Panc1 (cell line): ENCODE measurements at regions of chr6 and their contacts with region 1.

Region 1: DNA sequence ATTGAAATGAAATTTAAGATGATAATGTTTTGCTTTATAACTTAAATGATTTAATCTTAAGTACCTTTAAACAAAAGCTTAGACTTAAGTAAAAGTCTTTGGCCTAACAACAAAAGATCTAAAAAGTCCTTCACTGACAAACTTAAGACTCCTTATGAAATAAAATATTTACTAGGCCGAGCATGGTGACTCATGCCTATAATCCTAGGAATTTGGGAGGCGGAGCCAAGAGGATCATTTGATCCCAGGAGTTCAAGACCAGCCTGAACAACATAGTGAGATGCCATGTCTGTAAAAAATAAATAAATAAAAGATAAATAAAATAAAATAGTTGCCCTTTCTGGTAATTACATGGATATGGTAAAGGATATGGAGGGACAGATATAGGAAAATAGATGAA is 12.4 kb downstream of the KATNA1 start:
- DNase-seq: no peak
- ATAC-seq: no peak
- H3K4me3 ChIP-seq: no peak overlapping the region
- H3K27ac ChIP-seq: no peak overlapping the region
- H3K4me1 ChIP-seq: no peaks in the 10 kb centered on the region
- H3K27me3 ChIP-seq: no peaks in the 10 kb centered on the region
- CTCF ChIP-seq: no peak

Region 2: DNA sequence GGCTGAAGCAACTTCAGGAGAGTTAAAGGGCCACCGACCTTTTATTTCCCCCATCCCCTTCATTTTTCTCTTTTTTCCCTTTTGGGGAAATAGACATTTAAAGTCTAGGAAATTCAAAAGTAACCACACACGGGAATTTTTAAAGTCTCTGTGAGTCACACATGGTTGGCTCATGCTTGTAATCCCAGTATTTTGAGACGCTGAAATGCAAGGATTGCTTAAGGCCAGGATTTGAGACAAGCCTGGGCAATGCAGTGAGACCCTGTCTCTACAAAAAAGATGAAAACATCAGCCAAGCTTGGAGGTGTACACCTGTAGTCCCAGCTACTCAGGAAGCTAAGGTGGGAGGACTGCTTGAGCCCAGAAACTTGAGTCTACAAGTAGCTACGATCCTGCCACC is 21.8 kb before region 1 on chr6:
- CTCF ChIA-PET with region 1: no interaction called
- POLR2A ChIA-PET with region 1: interaction called, 15 read pairs
- in situ Hi-C with region 1: no loop called
- intact Hi-C with region 1: no loop called
- DNase-seq: no peak
- ATAC-seq: no peak
- H3K4me3 ChIP-seq: no peak overlapping the region
- H3K27ac ChIP-seq: no peak overlapping the region
- H3K4me1 ChIP-seq: no peaks in the 10 kb centered on the region
- H3K27me3 ChIP-seq: no peaks in the 10 kb centered on the region
- CTCF ChIP-seq: no peak

Region 3: GRCh38 chr6:149834513-149835481 is 198.7 kb after region 1 on chr6:
- CTCF ChIA-PET with region 1: no interaction called
- POLR2A ChIA-PET with region 1: no interaction called
- in situ Hi-C with region 1: no loop called
- intact Hi-C with region 1: no loop called
- DNase-seq: peak; percentile 62
- ATAC-seq: peak; percentile 72
- H3K4me3 ChIP-seq: no peak overlapping the region
- H3K27ac ChIP-seq: no peak overlapping the region
- H3K4me1 ChIP-seq: 0 out of 2 replicates have a peak, but pooled peaks cover 3% of the 10 kb centered on the region
- H3K27me3 ChIP-seq: no peaks in the 10 kb centered on the region
- CTCF ChIP-seq: peak; percentile 89